ENCODE measurements at regions of chr12 and their contacts with region 1.

Region 1: GRCh38 chr12:49636979-49637755 is 13.8 kb downstream of the PRPF40B start:
- DNase-seq: peak; percentile 63
- ATAC-seq: peak; percentile 86
- H3K4me3 Mint-ChIP-seq: peak overlapping the region; percentile 15; the same call in 1 of the 2 replicates
- H3K27ac Mint-ChIP-seq: peak overlapping the region; percentile 96
- H3K4me1 Mint-ChIP-seq: peaks cover 21% of the 10 kb centered on the region
- H3K27me3 Mint-ChIP-seq: no peaks in the 10 kb centered on the region
- CTCF ChIP-seq: 0 out of 2 replicates have a peak, but pooled peaks have one; percentile 23

Region 2: GRCh38 chr12:49615725-49616124 is 21.4 kb before region 1 on chr12:
- CTCF ChIA-PET with region 1: no interaction called
- POLR2A ChIA-PET with region 1: no interaction called
- DNase-seq: no peak
- ATAC-seq: no peak
- H3K4me3 Mint-ChIP-seq: no peak overlapping the region
- H3K27ac Mint-ChIP-seq: no peak overlapping the region
- H3K4me1 Mint-ChIP-seq: peaks cover 22% of the 10 kb centered on the region
- H3K27me3 Mint-ChIP-seq: peaks cover 4% of the 10 kb centered on the region; the same call in 1 of the 2 replicates
- CTCF ChIP-seq: no peak

Region 3: DNA sequence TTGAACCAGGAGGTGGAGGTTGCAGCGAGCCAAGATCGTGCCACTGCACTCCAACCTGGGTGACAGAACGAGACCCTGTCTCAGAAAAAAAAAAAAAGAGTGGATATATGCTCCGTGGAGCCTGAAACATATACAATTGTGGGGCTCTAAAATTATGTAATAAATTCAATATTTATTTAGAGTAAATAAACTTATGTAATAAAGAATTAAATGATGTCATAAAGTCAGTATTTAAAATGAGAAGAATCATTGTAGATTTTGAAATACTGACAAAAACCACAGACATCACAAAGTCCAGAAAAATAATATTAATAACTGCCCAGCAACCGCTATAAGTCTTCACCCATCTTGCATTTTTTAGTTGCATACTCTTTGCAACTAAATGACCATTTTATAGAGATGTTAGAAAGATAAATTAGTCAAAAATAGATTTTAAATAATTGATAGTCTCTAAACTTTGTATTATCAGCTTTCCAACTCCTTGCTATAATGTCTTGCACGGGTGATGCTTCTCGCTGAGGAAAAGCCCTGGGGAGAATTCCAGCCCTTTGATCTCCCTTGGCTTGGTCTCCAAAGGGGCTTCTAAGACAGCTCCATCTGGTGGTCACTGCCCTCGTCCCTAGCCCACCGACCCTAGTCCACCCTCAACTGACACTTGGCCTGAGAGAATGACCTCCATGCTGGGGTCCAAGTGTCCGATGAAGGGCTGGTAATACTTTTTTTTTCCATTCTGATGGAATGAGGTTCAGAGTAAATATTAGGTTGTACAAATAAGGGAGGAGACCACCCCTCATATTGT is 96.3 kb after region 1 on chr12:
- CTCF ChIA-PET with region 1: interaction called, 15 read pairs
- POLR2A ChIA-PET with region 1: no interaction called
- DNase-seq: peak; percentile 53
- ATAC-seq: peak; percentile 71
- H3K4me3 Mint-ChIP-seq: no peak overlapping the region
- H3K27ac Mint-ChIP-seq: no peak overlapping the region
- H3K4me1 Mint-ChIP-seq: no peaks in the 10 kb centered on the region
- H3K27me3 Mint-ChIP-seq: peaks cover 14% of the 10 kb centered on the region
- CTCF ChIP-seq: no peak

Measured in WTC11 (cell line).